ENCODE measurements at regions of chr2 and their contacts with region 1.

Region 1: GRCh38 chr2:105866216-105867185 is 121.8 kb downstream of the NCK2 start:
- DNase-seq: peak; percentile 80
- ATAC-seq: peak; percentile 89
- H3K4me3 ChIP-seq: no peak overlapping the region
- H3K27ac ChIP-seq: peak overlapping the region; percentile 76
- H3K4me1 ChIP-seq: peaks cover 19% of the 10 kb centered on the region
- H3K27me3 ChIP-seq: no peaks in the 10 kb centered on the region
- CTCF ChIP-seq: no peak
- POLR2A ChIP-seq: no peak
- RAD21 ChIP-seq: no peak

Region 2: DNA sequence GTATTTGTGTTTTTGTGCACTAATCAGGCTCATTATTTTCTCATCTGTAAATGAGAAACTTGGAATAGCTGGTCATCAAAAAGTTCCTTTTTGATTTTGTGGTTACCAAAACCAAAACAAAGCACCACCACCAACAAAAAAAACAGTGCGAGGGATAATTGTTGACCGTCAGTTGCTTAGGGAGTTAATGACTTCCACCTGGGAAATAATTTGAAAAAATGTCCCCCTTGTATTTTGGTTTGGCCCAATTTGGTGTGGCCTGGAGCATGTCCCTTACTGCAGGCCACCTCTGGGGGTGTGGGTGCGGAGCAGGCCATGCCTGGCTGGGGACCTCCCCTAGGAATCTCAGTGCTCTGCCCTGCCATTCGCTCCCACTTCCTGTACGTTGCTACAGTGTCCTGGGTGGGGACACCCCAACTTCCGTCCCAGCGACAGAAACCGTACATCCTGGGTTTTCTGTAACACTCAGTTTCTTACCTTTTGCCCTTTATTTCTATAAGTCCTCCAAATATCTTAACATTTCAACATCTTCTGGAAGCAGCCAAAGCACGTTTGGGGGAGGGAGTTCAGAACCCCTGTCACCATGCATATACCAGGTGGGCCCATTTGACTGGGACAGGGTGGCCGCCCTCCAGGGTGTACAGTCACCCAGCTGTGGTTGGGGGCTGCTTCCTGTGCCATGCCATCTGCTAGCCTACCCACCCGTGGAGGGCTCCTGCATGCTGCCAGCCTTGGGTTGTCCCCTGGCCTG is 90.5 kb before region 1 on chr2:
- CTCF ChIA-PET with region 1: no interaction called
- POLR2A ChIA-PET with region 1: no interaction called
- dilution Hi-C with region 1: no loop called
- in situ Hi-C with region 1: no loop called
- intact Hi-C with region 1: no loop called
- DNase-seq: no peak
- ATAC-seq: no peak
- H3K4me3 ChIP-seq: no peak overlapping the region
- H3K27ac ChIP-seq: no peak overlapping the region
- H3K4me1 ChIP-seq: peaks cover 10% of the 10 kb centered on the region
- H3K27me3 ChIP-seq: no peaks in the 10 kb centered on the region
- CTCF ChIP-seq: no peak
- POLR2A ChIP-seq: no peak
- RAD21 ChIP-seq: no peak

Region 3: GRCh38 chr2:105800036-105800713 is 66.3 kb before region 1 on chr2:
- CTCF ChIA-PET with region 1: no interaction called
- POLR2A ChIA-PET with region 1: no interaction called
- dilution Hi-C with region 1: no loop called
- in situ Hi-C with region 1: no loop called
- intact Hi-C with region 1: loop called (anchors 2 kb)
- DNase-seq: peak; percentile 34
- ATAC-seq: no peak
- H3K4me3 ChIP-seq: no peak overlapping the region
- H3K27ac ChIP-seq: no peak overlapping the region
- H3K4me1 ChIP-seq: peaks cover 18% of the 10 kb centered on the region
- H3K27me3 ChIP-seq: no peaks in the 10 kb centered on the region
- CTCF ChIP-seq: no peak
- POLR2A ChIP-seq: no peak
- RAD21 ChIP-seq: no peak